WTC11 (cell line): ENCODE measurements at regions of chr13 and their contacts with region 1.

Region 1: GRCh38 chr13:97109841-97110492 is 112.2 kb upstream of the MBNL2 start:
- DNase-seq: peak; percentile 83
- ATAC-seq: peak; percentile 93
- H3K4me3 Mint-ChIP-seq: peak overlapping the region; percentile 38
- H3K27ac Mint-ChIP-seq: no peak overlapping the region
- H3K4me1 Mint-ChIP-seq: peaks cover 15% of the 10 kb centered on the region
- H3K27me3 Mint-ChIP-seq: peaks cover 25% of the 10 kb centered on the region
- CTCF ChIP-seq: peak; percentile 68

Region 2: DNA sequence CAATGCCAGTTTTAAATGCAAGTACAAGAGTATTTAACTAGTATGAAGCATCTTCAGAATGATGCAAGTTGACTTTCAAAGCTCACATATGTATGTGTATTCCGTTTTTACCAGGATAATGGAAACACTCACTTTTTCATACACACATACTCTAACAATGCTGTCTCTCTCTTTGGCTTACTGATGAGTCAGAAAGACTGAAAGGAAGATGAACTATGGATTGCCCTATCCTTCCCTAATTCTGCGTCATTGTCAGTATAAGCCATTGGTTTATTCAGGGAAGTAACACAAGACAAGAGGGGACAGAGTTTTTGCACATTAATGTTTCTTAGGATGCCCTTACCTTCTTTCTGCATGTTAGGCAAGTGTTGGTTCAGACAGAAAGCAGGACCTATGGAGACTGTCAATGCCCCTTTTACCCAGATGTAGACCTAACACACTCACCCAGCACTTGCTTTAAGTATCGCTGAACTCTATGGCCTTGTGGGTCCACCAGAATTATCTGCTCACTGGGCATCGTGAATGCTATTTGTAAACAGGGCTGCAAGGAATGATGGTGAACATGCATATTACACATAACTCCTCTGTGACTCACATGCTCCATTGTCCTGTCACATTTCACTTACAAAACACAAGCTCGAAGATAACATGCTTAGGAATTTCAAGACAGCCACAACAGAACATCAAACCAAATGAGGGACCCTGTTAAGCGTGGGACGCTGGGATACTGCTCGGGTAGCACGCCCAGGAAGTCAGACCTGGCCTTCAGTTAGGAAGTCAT is 105.7 kb before region 1 on chr13:
- CTCF ChIA-PET with region 1: no interaction called
- POLR2A ChIA-PET with region 1: no interaction called
- DNase-seq: no peak
- ATAC-seq: no peak
- H3K4me3 Mint-ChIP-seq: no peak overlapping the region
- H3K27ac Mint-ChIP-seq: no peak overlapping the region
- H3K4me1 Mint-ChIP-seq: peaks cover 6% of the 10 kb centered on the region
- H3K27me3 Mint-ChIP-seq: peaks cover 75% of the 10 kb centered on the region
- CTCF ChIP-seq: no peak

Region 3: DNA sequence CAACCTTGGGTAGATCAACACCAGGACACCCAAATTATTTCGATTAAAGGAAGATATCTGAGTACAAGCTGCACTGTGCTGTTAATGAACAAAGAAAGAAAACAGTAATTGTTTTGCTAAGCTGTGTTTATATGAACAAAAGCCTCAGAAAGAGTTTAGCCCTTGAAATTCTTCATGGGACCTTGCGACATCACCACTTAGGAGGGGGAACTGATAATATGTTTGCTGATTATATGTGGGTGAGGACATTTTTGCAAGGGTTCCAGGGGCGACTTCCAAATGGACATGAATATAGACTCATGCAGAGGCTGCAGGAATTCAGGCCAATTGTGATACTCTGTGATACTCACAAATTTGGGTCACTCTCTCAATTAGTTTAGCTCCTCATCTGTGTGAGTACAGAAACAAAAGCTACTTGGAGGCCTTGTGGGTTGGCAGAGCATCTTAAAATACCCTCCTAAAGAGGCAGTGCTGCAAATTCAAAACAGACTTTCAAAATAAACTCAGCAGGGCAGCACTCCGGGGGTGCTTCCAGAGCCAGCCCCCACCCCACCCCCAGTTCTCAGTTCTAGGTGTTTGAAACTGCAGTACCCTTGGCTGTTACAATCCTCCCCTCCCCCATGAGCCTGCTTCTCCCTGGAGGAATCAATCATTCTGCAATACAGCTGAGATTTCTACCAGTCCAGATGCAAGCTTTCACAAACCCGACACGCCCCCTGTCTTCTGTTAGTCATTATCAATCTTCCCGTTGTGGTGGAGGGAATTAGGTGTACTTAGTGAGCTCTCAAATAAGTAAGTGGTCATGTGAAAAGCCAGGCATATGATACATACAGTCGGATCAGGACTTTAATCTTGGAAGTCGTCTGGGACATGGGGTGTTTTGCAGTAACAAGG is 15.2 kb after region 1 on chr13:
- CTCF ChIA-PET with region 1: interaction called, 20 read pairs
- POLR2A ChIA-PET with region 1: no interaction called
- DNase-seq: peak; percentile 15
- ATAC-seq: peak; percentile 41
- H3K4me3 Mint-ChIP-seq: no peak overlapping the region
- H3K27ac Mint-ChIP-seq: no peak overlapping the region
- H3K4me1 Mint-ChIP-seq: peaks cover 34% of the 10 kb centered on the region
- H3K27me3 Mint-ChIP-seq: peaks cover 6% of the 10 kb centered on the region; the same call in 1 of the 2 replicates
- CTCF ChIP-seq: no peak

Region 4: DNA sequence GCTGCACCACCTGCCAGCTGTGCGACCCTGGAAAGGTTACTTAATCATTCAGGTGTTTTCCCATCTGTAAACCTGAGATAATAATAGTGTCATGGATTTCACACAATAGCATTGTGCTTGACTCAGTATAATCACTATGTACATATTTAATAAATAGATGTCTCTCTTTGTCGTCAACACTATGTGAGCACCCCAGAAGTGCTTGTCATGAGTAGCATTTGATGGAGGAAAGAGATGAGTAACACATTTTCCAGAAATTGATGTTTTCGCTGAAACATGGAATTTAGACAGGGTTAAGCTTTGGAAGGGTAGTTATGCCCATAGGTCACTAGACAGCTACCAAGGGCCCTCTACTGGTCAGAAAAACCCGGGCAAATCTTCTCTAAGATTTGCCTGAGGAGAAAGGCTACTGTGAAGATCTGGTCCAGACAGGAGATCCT is 102.7 kb after region 1 on chr13:
- CTCF ChIA-PET with region 1: interaction called, 28 read pairs
- POLR2A ChIA-PET with region 1: no interaction called
- DNase-seq: peak; percentile 12
- ATAC-seq: peak; percentile 71
- H3K4me3 Mint-ChIP-seq: no peak overlapping the region
- H3K27ac Mint-ChIP-seq: no peak overlapping the region
- H3K4me1 Mint-ChIP-seq: no peaks in the 10 kb centered on the region
- H3K27me3 Mint-ChIP-seq: peaks cover 43% of the 10 kb centered on the region
- CTCF ChIP-seq: no peak

Region 5: GRCh38 chr13:97257800-97258799 is 148.1 kb after region 1 on chr13:
- CTCF ChIA-PET with region 1: interaction called, 11 read pairs
- POLR2A ChIA-PET with region 1: no interaction called
- DNase-seq: peak; percentile 55
- ATAC-seq: peak; percentile 92
- H3K4me3 Mint-ChIP-seq: no peak overlapping the region
- H3K27ac Mint-ChIP-seq: no peak overlapping the region
- H3K4me1 Mint-ChIP-seq: peaks cover 32% of the 10 kb centered on the region
- H3K27me3 Mint-ChIP-seq: peaks cover 20% of the 10 kb centered on the region
- CTCF ChIP-seq: no peak

Region 6: DNA sequence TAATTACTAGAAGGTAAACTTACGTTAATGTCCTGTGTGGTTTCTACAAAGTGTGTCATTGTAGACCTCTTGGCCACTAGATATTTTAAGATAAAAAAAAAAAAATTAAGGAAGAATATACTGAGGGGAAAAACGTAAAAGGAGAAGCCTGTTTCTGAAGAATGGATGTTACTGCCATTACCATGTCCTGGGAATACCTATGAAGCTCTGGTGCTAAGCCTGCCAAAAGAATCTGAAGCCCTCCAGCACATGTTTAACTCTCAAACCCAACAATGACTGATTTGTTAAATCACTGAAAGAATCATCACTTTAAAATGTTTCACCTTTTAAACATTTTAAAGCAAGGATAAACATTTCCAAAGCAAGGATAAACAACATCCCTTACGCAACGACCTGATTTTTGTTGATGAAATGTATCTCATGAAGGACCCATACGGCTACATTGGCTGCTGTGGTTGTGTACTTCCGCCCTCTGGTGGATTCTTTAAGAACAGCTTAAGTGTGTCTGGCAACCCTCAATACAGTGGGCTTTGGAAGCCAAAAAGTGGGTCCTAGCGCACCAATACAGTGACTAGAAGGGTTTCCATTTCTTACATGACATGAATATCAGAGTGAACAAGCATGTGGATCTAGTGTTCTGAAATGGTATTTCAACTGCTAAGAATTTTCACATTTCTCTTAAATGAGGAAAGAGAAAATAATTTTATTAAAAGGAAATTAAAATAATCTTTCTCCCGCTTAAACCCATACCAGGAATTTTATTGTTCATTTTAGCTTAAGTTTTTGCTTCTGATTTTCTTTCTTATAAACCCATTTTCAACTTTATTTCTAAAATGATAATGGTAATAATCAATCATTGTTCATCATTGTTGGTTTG is 249.5 kb after region 1 on chr13:
- CTCF ChIA-PET with region 1: interaction called, 47 read pairs
- POLR2A ChIA-PET with region 1: interaction called, 3 read pairs
- DNase-seq: peak; percentile 40
- ATAC-seq: peak; percentile 99
- H3K4me3 Mint-ChIP-seq: no peak overlapping the region
- H3K27ac Mint-ChIP-seq: no peak overlapping the region
- H3K4me1 Mint-ChIP-seq: peaks cover 9% of the 10 kb centered on the region; the same call in 1 of the 2 replicates
- H3K27me3 Mint-ChIP-seq: no peaks in the 10 kb centered on the region
- CTCF ChIP-seq: peak; percentile 76